HepG2 (cell line): ENCODE measurements at regions of chr6 and their contacts with region 1.

Region 1: DNA sequence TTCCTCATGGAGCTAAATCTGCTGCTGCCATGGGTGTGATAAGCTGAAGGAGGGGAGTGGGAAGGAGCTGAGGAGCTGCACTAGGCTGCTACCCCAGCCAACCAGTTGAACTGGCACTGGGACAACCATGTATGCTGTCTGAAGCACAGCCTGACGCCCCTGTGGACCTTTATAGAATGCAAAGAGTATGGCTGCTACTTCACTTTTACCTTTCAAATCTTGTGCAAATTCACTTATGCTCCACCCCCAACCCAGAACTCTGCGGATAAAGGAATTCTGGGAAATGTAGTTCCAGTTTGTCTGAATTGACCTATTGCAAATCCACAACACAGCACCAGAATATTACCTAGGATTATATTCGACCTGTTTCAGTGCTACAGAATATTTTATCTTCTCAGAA is 217.4 kb upstream of the SLC35B3 start:
- DNase-seq: peak; percentile 44
- ATAC-seq: peak; percentile 75
- H3K4me3 ChIP-seq: peak overlapping the region; percentile 31 to 65 (median 44); a peak in 5 of 6 replicates
- H3K27ac ChIP-seq: peak overlapping the region; percentile 90
- H3K4me1 ChIP-seq: peaks cover 47% of the 10 kb centered on the region
- H3K27me3 ChIP-seq: no peaks in the 10 kb centered on the region
- CTCF ChIP-seq: no peak
- EP300 ChIP-seq: no peak
- POLR2A ChIP-seq: peak; percentile 58 to 87
- RAD21 ChIP-seq: no peak

Region 2: DNA sequence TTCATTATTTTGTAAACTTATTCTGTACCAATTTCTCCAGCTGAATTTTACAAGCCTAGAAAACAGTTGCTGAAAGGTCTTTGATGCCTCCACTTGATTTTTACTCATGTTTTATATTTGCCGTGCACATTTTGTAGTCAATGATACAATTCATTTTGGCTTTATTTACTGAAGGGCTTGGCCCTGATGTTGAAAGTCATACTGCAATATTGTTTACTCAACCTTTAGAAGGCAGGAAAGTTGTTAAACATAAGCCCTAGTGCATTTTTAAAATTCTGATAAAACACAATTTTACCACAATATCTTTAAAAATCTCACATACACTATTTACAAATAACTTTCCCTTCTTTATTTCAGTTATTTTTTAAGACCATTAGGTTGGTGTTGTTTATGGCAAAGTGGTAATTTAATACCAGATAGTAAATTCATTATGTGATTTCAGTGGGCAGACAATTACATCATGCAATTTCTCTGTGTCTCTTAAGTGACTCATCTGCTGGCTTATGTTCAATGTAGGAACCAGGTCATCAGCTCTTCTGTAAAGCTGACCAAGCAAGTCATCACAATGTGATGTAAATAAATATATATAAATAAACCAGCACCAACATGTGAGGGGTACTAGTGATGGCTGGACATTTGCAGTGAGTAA is 96.2 kb before region 1 on chr6:
- CTCF ChIA-PET with region 1: no interaction called
- POLR2A ChIA-PET with region 1: no interaction called
- in situ Hi-C with region 1: no loop called
- intact Hi-C with region 1: loop called (anchors 2 kb)
- DNase-seq: peak; percentile 35
- ATAC-seq: peak; percentile 78
- H3K4me3 ChIP-seq: no peak overlapping the region
- H3K27ac ChIP-seq: no peak overlapping the region
- H3K4me1 ChIP-seq: peaks cover 19% of the 10 kb centered on the region
- H3K27me3 ChIP-seq: no peaks in the 10 kb centered on the region
- CTCF ChIP-seq: no peak
- EP300 ChIP-seq: no peak
- POLR2A ChIP-seq: no peak
- RAD21 ChIP-seq: no peak

Region 3: DNA sequence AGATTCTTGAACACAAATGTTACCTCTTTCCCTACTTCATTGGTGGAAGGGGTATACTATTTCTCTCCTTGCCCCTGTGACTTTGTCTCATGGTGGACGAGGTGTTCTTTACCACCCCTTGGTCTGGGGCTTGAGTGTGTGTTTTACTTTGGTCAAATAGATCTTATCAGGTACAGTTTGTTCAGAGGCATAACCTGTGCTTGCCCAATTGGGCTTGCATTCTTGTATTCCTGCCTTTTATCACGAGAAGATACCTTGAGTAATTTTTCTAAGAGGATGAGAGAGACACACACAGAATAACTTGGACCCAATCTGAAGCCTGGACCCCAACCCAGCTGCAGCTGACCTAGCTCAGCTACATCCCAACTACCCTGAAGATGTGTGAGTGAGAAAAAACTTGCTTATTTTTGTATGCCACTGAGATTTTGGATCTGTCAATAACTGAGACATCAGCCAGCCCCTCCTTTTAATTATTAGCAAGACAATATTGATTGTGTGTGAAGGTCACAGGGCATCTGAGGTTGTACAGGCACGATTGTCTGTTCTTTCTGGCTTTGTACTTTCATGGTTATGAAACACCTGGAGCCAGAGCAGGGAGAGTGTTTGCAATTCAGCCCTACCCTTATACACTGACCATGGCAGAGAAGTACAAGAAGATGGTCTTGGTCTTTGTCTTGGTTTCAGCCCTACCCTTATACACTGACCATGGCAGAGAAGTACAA is 12.6 kb before region 1 on chr6:
- CTCF ChIA-PET with region 1: no interaction called
- POLR2A ChIA-PET with region 1: interaction called, 5 read pairs
- in situ Hi-C with region 1: no loop called
- intact Hi-C with region 1: loop called (anchors 1 kb)
- DNase-seq: peak; percentile 13
- ATAC-seq: peak; percentile 95
- H3K4me3 ChIP-seq: no peak overlapping the region
- H3K27ac ChIP-seq: no peak overlapping the region
- H3K4me1 ChIP-seq: peaks cover 22% of the 10 kb centered on the region; the same call in 1 of the 2 replicates
- H3K27me3 ChIP-seq: no peaks in the 10 kb centered on the region
- CTCF ChIP-seq: no peak
- EP300 ChIP-seq: peak in 1 of 2 experiments; percentile 53; a peak in 2 of 4 replicates
- POLR2A ChIP-seq: no peak
- RAD21 ChIP-seq: no peak

Region 4: DNA sequence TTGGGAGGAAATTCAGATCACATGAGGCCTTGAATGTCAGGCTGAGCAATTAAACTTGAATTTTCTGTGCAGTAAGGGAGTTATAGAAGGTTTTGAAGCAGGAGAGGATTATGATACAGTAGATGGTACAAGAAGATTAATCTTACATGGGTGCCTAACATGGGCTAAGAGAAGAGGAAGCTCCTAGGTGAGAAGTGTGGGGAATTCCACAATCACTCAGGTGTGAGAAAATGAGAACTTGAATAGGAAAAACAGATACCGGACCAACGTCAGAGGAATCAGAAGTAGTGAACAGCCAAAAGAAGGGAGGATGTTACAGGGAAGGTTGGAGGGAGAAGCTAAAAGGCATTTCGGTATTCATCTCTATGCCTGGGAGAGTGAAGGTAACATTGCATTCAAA is 33.4 kb after region 1 on chr6:
- CTCF ChIA-PET with region 1: no interaction called
- POLR2A ChIA-PET with region 1: no interaction called
- in situ Hi-C with region 1: no loop called
- intact Hi-C with region 1: no loop called
- DNase-seq: no peak
- ATAC-seq: no peak
- H3K4me3 ChIP-seq: no peak overlapping the region
- H3K27ac ChIP-seq: no peak overlapping the region
- H3K4me1 ChIP-seq: no peaks in the 10 kb centered on the region
- H3K27me3 ChIP-seq: no peaks in the 10 kb centered on the region
- CTCF ChIP-seq: no peak
- EP300 ChIP-seq: no peak
- POLR2A ChIP-seq: no peak
- RAD21 ChIP-seq: no peak